GM23248 (cell line): ENCODE measurements at regions of chr6 and their contacts with region 1.

Region 1: DNA sequence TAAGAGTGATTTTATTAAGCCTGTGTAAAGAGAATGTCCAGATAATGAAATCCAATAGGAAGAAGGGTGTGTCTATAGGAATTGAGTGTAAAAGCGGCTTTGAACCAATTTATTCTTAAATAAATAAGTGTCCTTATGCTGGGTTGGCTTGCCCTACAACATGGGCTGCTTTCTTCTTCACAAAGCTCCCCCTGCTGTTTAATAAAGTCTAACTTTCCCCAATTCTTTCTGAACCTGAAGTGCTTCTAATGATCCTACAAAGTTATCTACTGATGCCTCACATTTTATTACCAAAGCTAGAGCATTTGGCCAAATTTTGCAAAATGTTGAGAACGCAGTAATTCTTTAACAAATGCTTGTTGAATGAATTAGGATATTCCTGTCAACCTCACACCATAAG is 36.3 kb upstream of the SIRT5 start:
- DNase-seq: peak; percentile 70
- H3K4me3 ChIP-seq: no peak overlapping the region
- H3K27ac ChIP-seq: no peak overlapping the region
- H3K4me1 ChIP-seq: peaks cover 7% of the 10 kb centered on the region
- H3K27me3 ChIP-seq: peaks cover 3% of the 10 kb centered on the region; the same call in 1 of the 2 replicates

Region 2: DNA sequence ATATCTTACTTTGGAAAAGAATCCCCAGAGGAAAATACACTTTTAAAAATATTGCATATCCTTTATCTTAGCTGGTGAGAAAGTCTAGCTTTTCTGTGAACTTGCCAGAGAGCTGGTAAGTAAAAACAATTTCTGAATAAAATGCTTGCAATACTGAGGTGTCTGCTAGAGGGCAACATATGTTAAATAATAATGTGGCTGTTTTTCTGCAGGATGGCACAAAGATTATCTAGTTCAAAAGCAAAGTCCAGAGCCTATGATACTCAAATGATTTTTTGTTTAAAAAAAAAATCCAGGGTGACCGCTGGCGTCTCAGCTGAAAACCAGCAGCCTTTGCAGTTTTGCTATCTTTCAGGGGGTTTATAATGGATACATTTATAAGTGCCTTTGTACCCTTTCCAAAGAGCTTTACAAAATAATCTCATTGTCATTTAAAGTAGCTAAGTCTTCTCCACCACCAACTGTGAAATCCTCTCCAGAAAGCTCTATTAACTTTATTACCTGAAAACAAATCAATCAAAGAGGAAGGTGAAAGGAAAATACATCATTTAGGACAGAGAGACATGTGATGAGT is 626.6 kb before region 1 on chr6:
- in situ Hi-C with region 1: loop called (anchors 25 kb)
- DNase-seq: peak; percentile 68
- H3K4me3 ChIP-seq: no peak overlapping the region
- H3K27ac ChIP-seq: no peak overlapping the region
- H3K4me1 ChIP-seq: no peaks in the 10 kb centered on the region
- H3K27me3 ChIP-seq: peaks cover 7% of the 10 kb centered on the region

Region 3: DNA sequence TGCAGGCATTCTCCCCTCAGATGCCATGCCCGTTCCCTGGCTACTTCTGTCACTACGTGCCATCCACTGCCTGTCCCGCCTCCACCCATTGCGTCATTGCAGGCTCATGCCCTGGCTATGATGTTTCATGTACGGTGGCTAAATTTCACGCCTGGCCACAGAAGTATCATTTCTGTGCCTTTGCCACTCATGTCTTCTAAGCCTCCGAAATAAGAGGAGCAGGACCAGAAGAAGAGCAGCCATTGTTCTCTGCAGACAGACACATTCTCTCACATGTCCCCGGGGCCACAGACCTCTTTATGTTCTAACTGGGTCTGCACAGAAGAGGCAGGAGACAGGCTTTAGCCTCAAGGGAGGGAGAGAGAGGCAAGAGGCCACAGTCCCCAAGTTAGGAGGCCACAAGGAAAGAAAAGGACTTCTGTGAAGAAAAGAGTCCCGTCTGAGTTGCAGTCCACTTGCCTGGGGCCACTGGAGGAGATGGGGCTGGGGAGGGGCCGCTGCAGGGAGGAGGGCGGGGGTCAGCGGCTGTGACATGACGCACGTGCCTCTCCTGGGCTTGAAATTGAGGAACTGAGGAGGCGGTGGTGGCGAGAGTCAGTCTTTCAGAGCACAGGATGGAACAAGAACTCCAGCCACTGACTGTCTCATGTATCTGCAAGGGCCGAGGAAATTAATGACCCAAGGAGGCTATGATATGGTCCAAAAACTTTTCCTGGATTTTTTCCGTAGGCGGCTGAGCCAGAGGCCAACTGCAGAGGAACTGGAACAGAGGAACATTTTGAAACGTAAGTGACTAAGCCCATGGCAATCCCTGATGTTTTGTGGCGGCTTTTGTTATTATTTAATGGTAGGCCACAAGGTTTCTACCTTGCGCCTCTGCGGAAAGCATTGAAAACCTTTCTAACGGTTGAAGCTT is 265.7 kb before region 1 on chr6:
- in situ Hi-C with region 1: no loop called
- DNase-seq: no peak
- H3K4me3 ChIP-seq: no peak overlapping the region
- H3K27ac ChIP-seq: no peak overlapping the region
- H3K4me1 ChIP-seq: peaks cover 5% of the 10 kb centered on the region
- H3K27me3 ChIP-seq: peaks cover 51% of the 10 kb centered on the region

Region 4: GRCh38 chr6:13328076-13328874 is 209.8 kb before region 1 on chr6 and contains the start of gene TBC1D7:
- in situ Hi-C with region 1: loop called (anchors 25 kb)
- DNase-seq: peak; percentile 94
- H3K4me3 ChIP-seq: peak within 1 kb of the TSS; percentile 92
- H3K27ac ChIP-seq: peak within 1 kb of the TSS; percentile 83
- H3K4me1 ChIP-seq: peaks cover 8% of the 10 kb centered on the region
- H3K27me3 ChIP-seq: no peaks in the 10 kb centered on the region
- total RNA-seq, gene TBC1D7: 8.5 and 18.7 TPM in 2 replicates